ENCODE measurements at regions of chr13 and their contacts with region 1.

Region 1: DNA sequence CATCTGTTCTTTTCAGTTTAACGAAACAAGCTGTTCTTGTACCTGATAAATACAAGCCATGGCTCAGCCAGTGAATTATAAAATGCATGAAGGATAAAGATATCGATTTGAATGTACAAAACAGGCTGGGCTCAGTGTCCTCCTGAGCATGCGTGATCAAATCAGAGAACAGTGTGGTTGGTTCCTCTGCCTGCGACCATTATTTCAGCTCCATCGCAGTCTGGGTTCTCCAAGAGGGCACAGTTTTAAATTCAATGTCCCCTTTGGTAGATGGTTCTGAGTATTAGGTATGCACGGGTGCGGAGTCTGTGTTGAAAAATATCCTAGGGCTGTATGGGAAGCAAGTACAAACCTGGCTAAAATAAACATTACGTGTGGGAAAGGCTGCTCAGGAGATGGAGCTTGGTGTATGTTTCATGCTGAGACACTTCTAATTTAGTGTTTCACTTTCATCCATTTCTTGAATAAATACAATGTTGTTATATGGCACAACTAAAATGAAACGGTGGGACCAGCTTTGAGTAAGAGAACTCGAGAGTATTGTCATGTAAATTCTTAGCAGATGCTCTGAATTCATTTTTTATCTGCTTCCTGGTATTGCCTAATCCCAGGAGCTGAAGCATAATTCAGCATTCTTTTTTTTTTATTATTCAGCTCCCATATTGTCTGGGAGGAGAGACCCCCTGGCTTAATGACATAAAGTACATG is 458.7 kb downstream of the MYO16 start:
- DNase-seq: no peak
- ATAC-seq: no peak
- H3K4me3 ChIP-seq: no peak overlapping the region
- H3K27ac ChIP-seq: no peak overlapping the region
- H3K4me1 ChIP-seq: no peaks in the 10 kb centered on the region
- H3K27me3 ChIP-seq: no peaks in the 10 kb centered on the region; a peak in 1 of 5 replicates
- CTCF ChIP-seq: no peak
- EP300 ChIP-seq: no peak
- POLR2A ChIP-seq: no peak
- RAD21 ChIP-seq: no peak

Region 2: DNA sequence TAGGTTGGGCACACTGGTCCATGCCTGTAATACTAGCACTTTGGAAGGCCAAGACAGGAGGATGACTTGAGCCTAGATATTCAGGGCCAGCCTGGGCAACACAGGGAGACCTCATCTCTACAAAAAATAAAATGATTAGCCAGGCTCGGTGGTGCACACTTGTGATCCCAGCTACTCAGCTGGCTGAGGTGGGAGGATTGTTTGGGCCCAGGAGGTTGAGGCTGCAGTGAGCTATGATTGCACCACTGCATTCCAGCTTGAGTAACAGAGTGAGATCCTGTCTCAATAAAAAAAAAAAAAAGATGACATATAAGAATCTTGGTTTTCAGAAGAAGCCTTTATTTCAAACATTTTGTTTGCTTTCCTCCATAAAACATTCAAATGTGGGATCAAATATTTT is 1050.7 kb before region 1 on chr13:
- CTCF ChIA-PET with region 1: no interaction called
- POLR2A ChIA-PET with region 1: no interaction called
- in situ Hi-C with region 1: no loop called
- intact Hi-C with region 1: loop called (anchors 5 kb)
- DNase-seq: no peak
- ATAC-seq: no peak
- H3K4me3 ChIP-seq: no peak overlapping the region
- H3K27ac ChIP-seq: no peak overlapping the region
- H3K4me1 ChIP-seq: no peaks in the 10 kb centered on the region
- H3K27me3 ChIP-seq: no peaks in the 10 kb centered on the region
- CTCF ChIP-seq: no peak
- EP300 ChIP-seq: no peak
- POLR2A ChIP-seq: no peak
- RAD21 ChIP-seq: no peak